ENCODE measurements at regions of chr12 and their contacts with region 1.

Region 1: GRCh38 chr12:4118017-4118510 is 155.5 kb upstream of the CCND2 start:
- DNase-seq: peak; percentile 43 to 51
- ATAC-seq: peak; percentile 58 to 81 (median 66)
- H3K4me3 ChIP-seq: peak overlapping the region in 1 of 10 donors; percentile 14
- H3K27ac ChIP-seq: no peak overlapping the region
- H3K4me1 ChIP-seq: peaks cover 0 to 33% (median 19%) of the 10 kb centered on the region in 9 donors
- H3K27me3 ChIP-seq: peaks cover 0 to 50% (median 0%) of the 10 kb centered on the region in 7 donors
- CTCF ChIP-seq: no peak

Region 2: DNA sequence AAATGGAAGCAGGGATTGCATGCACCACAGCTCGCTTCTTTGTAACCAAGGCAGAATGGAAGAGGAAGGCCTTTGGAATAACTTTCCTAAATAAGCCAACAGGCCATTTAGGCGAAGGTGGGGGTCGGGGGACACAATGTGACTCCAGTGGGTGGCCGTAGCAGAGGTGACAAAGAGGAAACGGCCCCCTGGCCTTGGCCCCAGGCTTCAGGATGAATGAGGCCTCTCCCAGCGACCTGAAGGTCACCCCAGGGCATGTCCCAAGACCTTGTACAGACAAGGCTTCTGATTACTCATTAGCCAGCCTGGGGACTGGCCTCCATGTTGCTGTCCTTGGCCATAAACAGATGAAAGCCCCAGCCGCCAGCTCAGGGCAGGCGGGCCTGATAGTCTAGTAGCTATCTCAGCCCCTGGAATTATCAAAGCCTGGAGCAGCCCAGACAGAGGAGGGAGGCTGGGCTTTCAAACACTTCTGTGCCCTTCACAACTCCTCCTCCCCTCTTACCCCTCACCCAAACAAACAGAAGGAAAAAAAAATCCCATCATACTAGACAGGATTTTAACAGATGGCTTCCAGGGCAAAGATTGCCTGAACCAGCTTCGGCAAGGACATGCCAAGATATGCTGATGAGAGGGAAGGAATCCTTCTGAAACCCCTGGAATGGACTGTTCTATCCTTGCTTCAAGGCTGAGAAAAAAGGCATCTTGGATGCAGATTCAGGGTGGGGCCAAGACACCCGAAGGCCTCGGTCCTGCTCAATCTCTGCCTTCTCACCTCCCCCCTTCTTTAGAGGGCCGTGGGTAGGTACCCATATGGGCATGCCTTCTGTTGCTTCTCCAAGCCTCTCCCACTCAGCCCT is 102.6 kb before region 1 on chr12:
- intact Hi-C with region 1: no loop called
- DNase-seq: no peak
- ATAC-seq: no peak
- H3K4me3 ChIP-seq: no peak overlapping the region
- H3K27ac ChIP-seq: no peak overlapping the region
- H3K4me1 ChIP-seq: no peaks in the 10 kb centered on the region
- H3K27me3 ChIP-seq: no peaks in the 10 kb centered on the region
- CTCF ChIP-seq: no peak

Region 3: GRCh38 chr12:4133029-4133428 is 15.0 kb after region 1 on chr12:
- intact Hi-C with region 1: no loop called
- DNase-seq: no peak
- ATAC-seq: no peak
- H3K4me3 ChIP-seq: no peak overlapping the region
- H3K27ac ChIP-seq: no peak overlapping the region
- H3K4me1 ChIP-seq: peaks cover 0 to 44% (median 8%) of the 10 kb centered on the region in 9 donors
- H3K27me3 ChIP-seq: peaks cover 0 to 5% (median 0%) of the 10 kb centered on the region in 7 donors
- CTCF ChIP-seq: no peak

Region 4: DNA sequence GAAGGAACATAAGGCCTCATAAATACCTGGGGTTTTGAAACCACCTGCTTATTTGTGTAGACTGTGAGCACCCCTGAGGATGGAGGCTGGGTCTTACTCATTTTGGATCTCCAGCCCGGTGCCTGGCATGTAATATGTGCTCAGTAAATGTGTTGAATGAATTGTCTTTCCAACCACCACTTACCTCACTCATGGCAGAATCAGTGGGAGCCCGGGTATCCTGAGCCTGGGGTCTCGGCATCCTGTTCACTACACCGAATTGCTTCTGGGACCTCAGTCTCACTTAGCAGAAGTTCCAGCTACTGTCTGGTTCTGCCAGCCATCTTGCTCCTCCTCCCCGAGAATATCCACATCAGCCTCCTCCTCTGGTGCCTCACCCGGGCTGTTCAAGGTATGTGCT is 112.5 kb after region 1 on chr12:
- intact Hi-C with region 1: loop called in 1 of 10 experiments (anchors 10 kb)
- DNase-seq: no peak
- ATAC-seq: no peak
- H3K4me3 ChIP-seq: no peak overlapping the region
- H3K27ac ChIP-seq: no peak overlapping the region
- H3K4me1 ChIP-seq: no peaks in the 10 kb centered on the region
- H3K27me3 ChIP-seq: peaks cover 0 to 24% (median 0%) of the 10 kb centered on the region in 7 donors
- CTCF ChIP-seq: no peak

Region 5: GRCh38 chr12:4287325-4288211 is 169.5 kb after region 1 on chr12:
- intact Hi-C with region 1: loop called in 1 of 10 experiments (anchors 10 kb)
- DNase-seq: no peak
- ATAC-seq: no peak
- H3K4me3 ChIP-seq: no peak overlapping the region
- H3K27ac ChIP-seq: peak overlapping the region in 4 of 10 donors; percentile 18 to 75 (median 42)
- H3K4me1 ChIP-seq: peaks cover 19 to 95% (median 78%) of the 10 kb centered on the region in 9 donors
- H3K27me3 ChIP-seq: no peaks in the 10 kb centered on the region
- CTCF ChIP-seq: no peak